ENCODE measurements at regions of chr17 and their contacts with region 1.

Region 1: DNA sequence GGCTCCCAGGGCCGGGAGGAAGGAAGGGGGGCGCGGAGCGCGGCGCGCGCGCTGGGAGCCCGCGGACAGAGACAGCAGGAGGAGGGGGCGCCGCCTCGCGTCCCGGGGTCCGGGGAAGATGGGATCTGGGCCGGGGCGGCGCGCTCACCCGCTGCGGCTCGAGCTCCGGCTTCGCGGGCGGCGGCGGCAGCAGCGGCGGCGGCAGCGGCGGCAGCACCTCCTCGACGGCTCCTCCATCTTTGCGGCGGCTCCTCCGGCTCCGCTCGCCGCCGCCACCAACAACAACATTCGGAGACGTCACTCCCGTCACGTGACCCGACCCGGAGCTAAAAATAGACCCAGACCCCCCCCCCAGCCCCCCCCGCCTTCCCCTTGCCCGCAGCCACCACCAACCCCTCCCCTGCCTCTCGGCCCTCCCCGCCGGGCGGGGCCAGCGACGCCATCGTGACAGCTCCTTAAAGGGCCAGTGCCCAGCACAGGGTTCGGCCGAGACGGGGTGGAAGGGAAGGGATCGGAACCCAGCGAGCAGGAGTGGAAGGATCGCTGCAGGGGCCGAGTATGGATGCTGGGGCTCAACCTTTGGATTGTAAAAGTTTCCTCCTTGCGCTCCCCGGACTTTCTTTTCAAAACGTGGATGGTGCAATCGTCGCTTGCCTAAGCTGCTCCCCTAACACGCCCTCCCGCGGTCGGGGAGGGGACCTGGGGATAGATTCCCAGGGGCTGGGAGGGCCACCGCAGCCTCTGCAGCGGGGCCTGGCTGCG is at the start of gene HDAC5:
- DNase-seq: peak; percentile 98
- H3K4me3 ChIP-seq: peak within 1 kb of the TSS; percentile 82 to 97 (median 96)
- H3K27ac ChIP-seq: peak within 1 kb of the TSS; percentile 93 to 95 (median 94)
- H3K4me1 ChIP-seq: peaks cover 0 to 55% (median 47%) of the 10 kb centered on the region in 4 donors
- H3K27me3 ChIP-seq: no peaks in the 10 kb centered on the region
- CTCF ChIP-seq: peak; percentile 44 to 63 (median 52)
- EP300 ChIP-seq: peak in 1 of 4 donors; percentile 28
- POLR2A ChIP-seq: no peak
- total RNA-seq, gene HDAC5: 58.2 to 87.5 (median 69.4) TPM

Region 2: GRCh38 chr17:43907425-43907981 is 216.0 kb before region 1 on chr17 and contains the start of gene MPP2:
- intact Hi-C with region 1: loop called (anchors 5 kb)
- DNase-seq: peak; percentile 92
- H3K4me3 ChIP-seq: peak within 1 kb of the TSS; percentile 73 to 96 (median 92)
- H3K27ac ChIP-seq: peak within 1 kb of the TSS; percentile 95 to 99 (median 99)
- H3K4me1 ChIP-seq: peaks cover 0 to 34% (median 24%) of the 10 kb centered on the region in 4 donors
- H3K27me3 ChIP-seq: no peaks in the 10 kb centered on the region
- CTCF ChIP-seq: peak in 3 of 4 experiments; percentile 23 to 51 (median 31)
- EP300 ChIP-seq: no peak
- POLR2A ChIP-seq: peak; percentile 49 to 82
- total RNA-seq, gene MPP2: 10.9 to 33.0 (median 14.9) TPM

Region 3: GRCh38 chr17:44070455-44071197 is 52.9 kb before region 1 on chr17 and contains the start of gene G6PC3:
- intact Hi-C with region 1: loop called (anchors 2 kb)
- DNase-seq: peak; percentile 98
- H3K4me3 ChIP-seq: peak within 1 kb of the TSS; percentile 67 to 73 (median 72)
- H3K27ac ChIP-seq: peak within 1 kb of the TSS; percentile 90 to 96 (median 94)
- H3K4me1 ChIP-seq: peaks cover 0 to 47% (median 41%) of the 10 kb centered on the region in 4 donors
- H3K27me3 ChIP-seq: no peaks in the 10 kb centered on the region
- CTCF ChIP-seq: no peak
- EP300 ChIP-seq: peak in 1 of 4 donors; percentile 87
- POLR2A ChIP-seq: peak; percentile 61 to 75
- total RNA-seq, gene G6PC3: 22.2 to 29.8 (median 25.9) TPM

Region 4: DNA sequence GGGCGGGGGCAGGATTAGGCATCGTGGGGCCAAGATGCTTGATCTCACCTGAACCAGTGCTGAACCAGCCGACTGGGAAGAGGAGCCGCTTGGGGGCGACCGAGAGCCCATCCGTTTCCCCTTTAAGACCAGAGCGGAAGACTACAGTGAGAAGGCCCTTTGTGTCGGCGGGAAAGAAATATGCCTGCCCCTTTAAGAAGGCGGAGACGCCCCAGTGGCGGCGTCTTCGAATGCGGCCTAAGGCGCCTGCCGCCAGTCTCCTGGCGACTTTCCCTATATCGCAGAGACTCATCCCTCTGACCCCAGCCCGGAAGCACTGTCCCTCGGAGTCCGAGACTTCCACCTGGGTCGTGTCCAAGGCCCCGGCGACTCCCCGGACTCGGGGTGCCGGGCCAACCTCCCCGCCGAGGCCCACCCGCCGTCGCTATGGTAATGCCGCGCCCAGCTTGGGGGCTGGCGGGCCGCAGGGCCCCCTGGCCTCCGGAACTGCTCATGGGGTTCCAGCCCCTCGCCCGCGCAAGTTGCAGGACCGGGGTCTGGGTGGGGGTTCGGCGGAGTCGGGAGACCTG is 18.3 kb after region 1 on chr17 and contains the start of gene HROB:
- intact Hi-C with region 1: loop called (anchors 2 kb)
- DNase-seq: peak; percentile 97
- H3K4me3 ChIP-seq: peak within 1 kb of the TSS; percentile 46 to 67 (median 60)
- H3K27ac ChIP-seq: peak within 1 kb of the TSS; percentile 45 to 73 (median 58)
- H3K4me1 ChIP-seq: peaks cover 0 to 27% (median 22%) of the 10 kb centered on the region in 4 donors
- H3K27me3 ChIP-seq: no peaks in the 10 kb centered on the region
- CTCF ChIP-seq: peak; percentile 77 to 86 (median 84)
- EP300 ChIP-seq: no peak
- POLR2A ChIP-seq: no peak
- total RNA-seq, gene HROB: 0.36 to 3.3 (median 0.52) TPM

Region 5: GRCh38 chr17:44186307-44187130 is 63.0 kb after region 1 on chr17 and contains the start of gene TMUB2:
- intact Hi-C with region 1: loop called (anchors 5 kb)
- DNase-seq: peak; percentile 99
- H3K4me3 ChIP-seq: peak within 1 kb of the TSS; percentile 60 to 94 (median 74)
- H3K27ac ChIP-seq: peak within 1 kb of the TSS; percentile 89 to 99 (median 94)
- H3K4me1 ChIP-seq: peaks cover 0 to 35% (median 27%) of the 10 kb centered on the region in 4 donors
- H3K27me3 ChIP-seq: no peaks in the 10 kb centered on the region
- CTCF ChIP-seq: no peak
- EP300 ChIP-seq: peak in 2 of 4 donors; percentile 24 to 65
- POLR2A ChIP-seq: peak; percentile 60 to 81
- total RNA-seq, gene TMUB2: 26.9 to 40.3 (median 29.2) TPM

Region 6: DNA sequence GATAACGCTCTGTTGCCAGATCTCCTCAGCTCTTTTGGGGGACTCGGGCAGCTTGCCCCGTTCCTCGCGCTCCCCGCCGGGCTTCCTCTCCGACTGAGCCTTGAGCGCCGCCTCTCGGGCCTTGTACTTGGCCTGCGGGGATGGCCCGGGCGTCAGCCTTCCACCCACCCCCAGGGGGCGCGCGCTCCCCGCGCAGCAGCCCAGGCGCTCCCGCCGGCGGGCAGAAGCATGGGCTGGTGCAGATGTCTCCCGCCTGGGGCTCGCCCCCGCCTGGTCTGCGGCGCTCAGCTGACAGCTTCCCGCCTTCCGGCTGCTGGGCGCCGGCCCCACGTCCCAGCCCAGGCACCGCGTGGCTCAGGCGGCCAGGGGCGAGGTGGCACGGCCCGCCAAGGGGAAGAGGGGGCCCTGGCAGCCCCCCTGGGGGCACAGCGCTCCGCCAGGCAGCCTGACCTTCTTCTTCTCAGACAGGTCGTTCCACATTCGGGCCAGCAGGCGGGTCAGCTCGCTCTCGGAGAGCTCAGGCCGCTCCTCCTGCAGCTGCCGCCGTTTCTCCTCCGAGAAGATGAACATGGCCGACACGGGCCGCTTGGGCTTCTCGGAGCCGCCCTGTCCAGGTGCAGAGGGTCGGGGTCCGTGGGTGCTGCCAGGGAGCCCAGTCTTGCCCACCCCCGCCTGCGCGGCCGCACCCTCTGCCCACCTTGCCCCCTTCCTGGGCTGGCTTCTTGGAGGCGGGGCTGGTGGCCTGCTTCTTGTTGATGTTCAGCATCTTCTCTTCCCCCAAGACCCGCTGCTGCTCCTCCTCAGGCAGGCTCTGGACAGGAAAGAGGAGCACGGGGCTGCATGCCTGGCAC is 87.0 kb after region 1 on chr17:
- intact Hi-C with region 1: no loop called
- DNase-seq: peak; percentile 96
- H3K4me3 ChIP-seq: peak overlapping the region in 2 of 4 donors; percentile 1 to 21
- H3K27ac ChIP-seq: peak overlapping the region; percentile 65 to 74 (median 70)
- H3K4me1 ChIP-seq: peaks cover 0 to 38% (median 15%) of the 10 kb centered on the region in 4 donors
- H3K27me3 ChIP-seq: no peaks in the 10 kb centered on the region
- CTCF ChIP-seq: peak; percentile 95 to 99 (median 98)
- EP300 ChIP-seq: no peak
- POLR2A ChIP-seq: no peak

Measured in sigmoid colon (tissue), 7 donors.